ENCODE measurements at regions of chr21 and their contacts with region 1.

Region 1: DNA sequence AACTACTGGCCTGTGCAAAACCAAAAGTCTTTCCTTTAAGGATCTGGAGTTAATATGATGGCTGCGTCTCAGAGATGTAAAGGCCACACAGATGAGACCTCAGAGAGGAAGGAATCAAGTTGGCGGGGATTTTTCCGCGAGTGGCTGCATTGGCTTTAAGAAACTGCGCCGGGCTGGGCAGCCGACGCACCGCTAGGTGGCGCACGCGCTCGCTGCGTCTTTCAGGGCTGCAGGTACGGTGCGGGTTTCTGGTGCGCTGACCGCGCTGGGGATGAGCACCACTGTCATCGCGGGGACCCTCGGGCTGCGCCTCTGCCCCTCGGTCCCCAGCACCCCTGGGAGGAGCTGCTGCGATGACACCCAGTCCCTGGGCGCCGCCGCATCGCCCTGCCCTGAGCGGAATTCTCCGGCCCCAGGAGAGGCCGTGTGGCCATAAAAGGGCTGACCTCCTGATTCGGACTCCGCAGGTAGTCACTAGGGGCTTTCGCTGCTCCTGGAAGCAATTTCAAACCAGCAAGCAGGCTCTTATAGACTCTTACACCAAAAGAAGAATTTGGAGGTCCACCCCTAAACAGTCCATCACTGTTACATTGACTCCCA is 241.0 kb downstream of the KCNJ6 start:
- H3K4me3 ChIP-seq: no peak overlapping the region
- H3K27ac ChIP-seq: no peak overlapping the region
- H3K4me1 ChIP-seq: no peaks in the 10 kb centered on the region
- CTCF ChIP-seq: peak; percentile 93

Region 2: DNA sequence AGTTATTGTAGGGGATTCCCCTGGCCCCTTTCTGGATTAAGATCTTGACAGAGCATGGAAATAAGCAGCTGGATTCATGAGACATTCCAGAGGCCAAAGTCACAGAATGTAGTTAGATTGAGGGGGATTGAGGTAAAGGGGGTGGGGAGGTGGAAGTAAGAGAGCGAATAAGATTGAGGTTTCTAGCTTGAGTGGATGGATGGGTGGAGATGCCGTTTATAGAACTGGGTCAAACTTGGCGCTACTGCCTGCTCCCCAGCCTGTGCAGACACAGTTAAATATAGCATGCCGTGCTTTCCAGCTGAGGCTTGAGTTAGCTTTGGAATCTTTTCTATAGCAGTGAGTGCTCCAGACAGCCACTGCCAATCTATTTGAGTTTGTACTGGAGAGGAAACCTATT is 223.1 kb before region 1 on chr21:
- CTCF ChIA-PET with region 1: no interaction called
- POLR2A ChIA-PET with region 1: no interaction called
- H3K4me3 ChIP-seq: no peak overlapping the region
- H3K27ac ChIP-seq: no peak overlapping the region
- H3K4me1 ChIP-seq: peaks cover 32% of the 10 kb centered on the region
- CTCF ChIP-seq: no peak

Region 3: GRCh38 chr21:37658817-37659458 is 16.4 kb before region 1 on chr21:
- CTCF ChIA-PET with region 1: interaction called, 15 read pairs
- POLR2A ChIA-PET with region 1: no interaction called
- H3K4me3 ChIP-seq: no peak overlapping the region
- H3K27ac ChIP-seq: no peak overlapping the region
- H3K4me1 ChIP-seq: no peaks in the 10 kb centered on the region
- CTCF ChIP-seq: no peak

Region 4: GRCh38 chr21:37686991-37687810 is 11.9 kb after region 1 on chr21:
- CTCF ChIA-PET with region 1: interaction called, 29 read pairs
- POLR2A ChIA-PET with region 1: no interaction called
- H3K4me3 ChIP-seq: no peak overlapping the region
- H3K27ac ChIP-seq: no peak overlapping the region
- H3K4me1 ChIP-seq: no peaks in the 10 kb centered on the region
- CTCF ChIP-seq: no peak

Region 5: DNA sequence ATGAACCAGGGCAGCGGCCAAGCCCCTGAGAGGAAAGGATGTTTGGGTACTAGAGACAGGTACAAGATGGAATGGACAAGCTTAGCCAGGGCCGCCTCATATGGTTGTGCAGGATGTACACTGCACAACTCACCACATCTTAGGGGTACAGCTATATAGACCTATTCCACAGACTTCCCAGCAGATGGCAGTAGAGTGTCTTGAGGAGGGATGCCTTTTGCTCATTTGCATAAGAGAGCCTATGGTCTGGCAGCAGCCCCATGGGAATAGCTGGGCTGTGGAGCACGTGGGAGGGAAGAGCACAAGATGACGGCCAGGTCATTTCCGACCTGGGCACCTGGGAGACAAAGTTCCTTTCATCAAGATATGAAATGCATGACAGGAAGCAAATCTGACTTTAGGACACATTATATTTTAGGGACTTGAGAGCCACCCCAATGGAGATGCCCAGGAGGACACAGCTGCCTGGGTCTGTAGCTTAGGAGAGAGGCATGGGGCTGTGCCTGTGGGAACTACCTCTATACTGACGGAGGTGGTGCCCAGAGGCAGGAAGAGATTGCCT is 25.4 kb after region 1 on chr21:
- CTCF ChIA-PET with region 1: interaction called, 12 read pairs
- POLR2A ChIA-PET with region 1: no interaction called
- H3K4me3 ChIP-seq: no peak overlapping the region
- H3K27ac ChIP-seq: no peak overlapping the region
- H3K4me1 ChIP-seq: no peaks in the 10 kb centered on the region
- CTCF ChIP-seq: peak; percentile 76

Region 6: DNA sequence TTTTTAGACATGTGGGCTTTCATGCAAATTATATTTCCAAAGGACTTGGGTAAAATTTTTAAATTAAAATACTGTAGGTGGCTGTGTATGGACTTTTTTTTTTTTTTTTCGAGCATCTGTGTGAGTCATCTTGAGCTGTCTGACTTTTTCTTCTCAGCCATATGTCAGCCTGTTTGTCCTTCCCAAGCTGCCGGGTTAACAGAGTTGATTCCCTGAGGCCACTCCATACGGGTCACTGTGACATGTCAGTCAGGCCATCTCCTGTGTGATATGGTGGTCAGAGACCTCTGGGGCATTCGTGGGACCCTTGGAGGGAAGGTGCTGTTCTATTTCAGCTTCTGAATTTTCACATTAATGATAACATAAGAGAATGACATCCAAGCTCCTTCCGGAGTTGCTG is 92.7 kb after region 1 on chr21:
- CTCF ChIA-PET with region 1: no interaction called
- POLR2A ChIA-PET with region 1: no interaction called
- H3K4me3 ChIP-seq: no peak overlapping the region
- H3K27ac ChIP-seq: no peak overlapping the region
- H3K4me1 ChIP-seq: no peaks in the 10 kb centered on the region
- CTCF ChIP-seq: no peak

Measured in HEK293 (cell line).